ENCODE measurements at regions of chr22 and their contacts with region 1.

Region 1: DNA sequence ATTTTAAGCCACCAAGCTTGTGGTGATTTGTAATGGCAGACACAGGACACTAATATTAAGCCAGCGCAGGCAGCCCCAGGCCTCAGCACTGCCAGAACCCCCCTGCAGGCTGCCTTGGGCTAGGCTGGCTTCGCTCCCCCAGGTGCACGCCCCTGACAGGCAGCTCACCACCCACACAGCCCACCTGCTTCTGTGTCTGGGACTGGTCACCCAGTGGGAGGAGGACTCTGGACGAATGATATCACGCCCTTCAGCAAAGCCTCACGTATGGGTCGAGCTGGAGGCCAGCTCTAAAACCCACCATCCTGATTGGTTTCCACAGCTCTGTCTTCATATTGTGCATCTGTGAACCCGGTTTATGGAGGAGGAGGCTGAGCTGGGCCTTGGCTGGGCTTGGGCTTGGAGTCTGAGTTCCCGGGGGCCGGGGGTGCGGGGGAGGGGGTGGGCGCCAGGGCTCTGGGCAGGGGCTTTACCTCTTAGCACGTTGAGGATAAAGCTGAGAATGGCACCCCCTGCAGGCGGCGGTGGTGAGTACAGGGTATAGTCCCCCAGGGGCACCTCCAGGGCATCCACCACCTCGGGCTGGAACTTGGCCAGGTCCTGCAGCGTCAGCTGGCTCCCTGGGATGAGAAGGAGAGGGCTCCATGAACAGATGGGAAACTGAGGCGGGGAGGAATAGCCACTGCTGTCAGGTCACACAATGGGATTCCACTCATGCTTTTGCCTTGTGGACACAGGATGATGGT is 13.8 kb downstream of the GGT5 start:
- DNase-seq: no peak
- ATAC-seq: peak; percentile 88
- H3K4me3 ChIP-seq: no peak overlapping the region
- H3K27ac ChIP-seq: peak overlapping the region; percentile 29; the same call in 1 of the 2 replicates
- H3K4me1 ChIP-seq: peaks cover 8 to 10% of the 10 kb centered on the region in 2 experiments; a peak in 3 of 4 replicates
- H3K27me3 ChIP-seq: no peaks in the 10 kb centered on the region
- CTCF ChIP-seq: peak in 2 of 3 experiments; percentile 54 to 59; a peak in 4 of 6 replicates
- POLR2A ChIP-seq: no peak
- RAD21 ChIP-seq: 0 out of 2 replicates have a peak, but pooled peaks have one; percentile 24

Region 2: DNA sequence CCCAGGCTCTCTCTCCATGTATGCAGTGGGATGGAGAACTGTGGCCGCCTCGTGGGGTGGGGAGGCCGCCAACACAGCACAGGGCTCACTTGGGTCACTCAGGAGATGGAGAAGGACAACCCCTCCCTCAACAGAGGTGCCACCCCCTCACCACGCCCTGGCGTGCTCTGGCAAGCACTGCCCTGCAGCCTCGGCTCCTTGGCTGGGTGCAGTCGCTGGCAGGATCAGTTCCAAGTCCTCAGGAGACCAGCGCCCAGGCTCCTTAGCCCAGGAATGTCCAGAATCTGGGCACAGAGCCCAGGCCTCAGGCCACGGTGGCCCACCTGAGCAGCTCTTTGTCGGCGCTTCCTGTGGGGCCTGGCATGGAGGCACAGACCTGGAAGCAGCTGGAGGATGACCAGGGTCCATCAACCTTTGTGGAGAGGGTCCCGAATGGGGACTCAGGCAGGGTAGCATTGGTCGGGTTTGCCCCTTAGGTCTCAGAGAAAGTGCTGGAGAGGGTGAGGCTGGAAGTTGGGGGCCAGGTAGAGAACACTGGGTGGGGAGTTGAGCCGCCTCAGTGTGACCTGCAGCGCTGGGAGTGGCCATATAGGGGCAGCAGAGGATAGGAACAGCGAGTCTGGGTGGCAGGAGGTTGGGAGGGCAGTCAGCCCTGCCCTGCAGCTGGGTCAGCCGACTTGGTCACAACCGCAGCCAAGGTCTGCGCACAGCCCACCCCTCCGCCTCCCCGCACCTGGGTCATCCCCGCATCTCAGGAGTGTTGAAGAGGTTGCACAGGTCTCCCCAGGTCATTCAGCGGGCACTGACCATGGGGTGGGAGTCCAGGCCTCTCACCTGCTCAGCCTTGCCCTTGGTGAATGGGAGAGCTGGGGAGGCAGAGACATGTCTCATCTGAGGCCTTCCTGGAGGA is 41.6 kb before region 1 on chr22:
- CTCF ChIA-PET with region 1: interaction called, 40 read pairs
- POLR2A ChIA-PET with region 1: interaction called, 4 read pairs
- RAD21 ChIA-PET with region 1: interaction called, 7 to 13 read pairs
- intact Hi-C with region 1: no loop called
- DNase-seq: no peak
- ATAC-seq: peak; percentile 93
- H3K4me3 ChIP-seq: no peak overlapping the region
- H3K27ac ChIP-seq: peak overlapping the region; percentile 74
- H3K4me1 ChIP-seq: peaks cover 35 to 36% of the 10 kb centered on the region in 2 experiments
- H3K27me3 ChIP-seq: no peaks in the 10 kb centered on the region
- CTCF ChIP-seq: peak; percentile 90 to 96 (median 94)
- POLR2A ChIP-seq: no peak
- RAD21 ChIP-seq: peak; percentile 100

Region 3: DNA sequence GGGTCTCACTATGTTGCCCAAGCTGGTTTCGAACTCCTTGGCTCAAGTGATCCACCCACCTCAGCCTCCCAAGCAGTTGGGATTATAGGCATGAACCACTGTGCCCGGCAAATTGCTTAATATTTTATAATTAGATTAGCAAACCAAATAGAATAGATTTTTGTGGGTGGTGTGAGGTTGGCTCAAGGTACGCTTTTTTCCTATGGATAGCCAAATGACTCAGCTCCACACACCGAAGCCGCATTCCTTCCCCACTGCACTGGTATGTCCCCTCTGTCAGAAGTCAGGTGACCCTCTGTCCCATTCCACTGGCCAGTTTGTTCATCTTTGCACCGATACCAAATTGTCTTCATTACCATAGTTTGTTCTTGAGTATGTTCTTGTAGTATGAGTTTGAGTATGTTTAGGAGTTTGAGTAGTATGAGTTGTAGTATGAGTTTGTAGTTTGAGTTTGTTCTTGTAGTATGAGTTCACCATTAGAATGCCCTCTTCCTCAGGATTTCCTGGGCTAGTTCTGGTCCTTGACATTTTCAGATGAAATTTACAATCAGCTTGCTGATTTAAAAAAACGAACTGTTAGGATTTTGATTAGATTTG is 30.4 kb before region 1 on chr22:
- CTCF ChIA-PET with region 1: interaction called, 20 read pairs
- POLR2A ChIA-PET with region 1: interaction called, 8 read pairs
- RAD21 ChIA-PET with region 1: interaction called in 1 of 2 experiments, 4 read pairs
- intact Hi-C with region 1: no loop called
- DNase-seq: peak; percentile 67
- ATAC-seq: peak; percentile 64
- H3K4me3 ChIP-seq: peak overlapping the region in 1 of 2 experiments; percentile 29; a peak in 2 of 4 replicates
- H3K27ac ChIP-seq: peak overlapping the region; percentile 100
- H3K4me1 ChIP-seq: peaks cover 92 to 95% of the 10 kb centered on the region in 2 experiments
- H3K27me3 ChIP-seq: no peaks in the 10 kb centered on the region
- CTCF ChIP-seq: no peak
- POLR2A ChIP-seq: no peak
- RAD21 ChIP-seq: no peak

Region 4: DNA sequence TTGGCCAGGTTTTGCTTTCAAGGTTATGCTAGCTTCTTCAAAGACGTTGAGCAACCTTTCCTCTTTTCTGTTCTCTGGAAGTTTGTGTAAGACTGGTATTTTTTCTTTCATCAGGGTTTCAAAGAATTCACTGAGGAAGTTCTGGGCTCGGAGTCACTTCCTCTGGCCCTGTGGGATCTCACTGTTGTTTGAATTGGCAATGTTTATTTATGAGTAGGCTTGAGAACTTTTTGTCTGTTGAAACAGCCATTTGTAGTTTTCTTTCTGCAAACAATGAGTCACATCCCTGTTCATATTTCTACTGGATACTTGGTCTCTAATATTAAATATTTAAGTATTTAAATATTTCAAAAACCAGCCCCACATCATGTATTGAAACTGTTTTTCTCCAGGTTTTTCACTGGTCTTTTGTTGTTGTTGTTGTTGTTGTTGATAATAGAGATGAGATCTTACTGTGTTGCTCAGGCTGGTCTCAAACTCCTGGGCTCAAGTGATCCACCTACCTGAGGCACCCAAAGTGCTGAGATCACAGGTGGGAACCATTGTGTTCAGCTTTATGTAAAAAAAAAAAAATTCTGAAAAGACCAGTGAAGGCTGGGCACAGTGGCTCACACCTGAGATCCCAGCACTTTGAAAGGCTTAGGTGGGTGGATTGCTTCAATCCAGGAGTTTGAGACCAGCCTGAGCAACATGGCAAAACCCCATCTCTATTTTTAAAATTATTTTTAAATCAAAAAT is 22.9 kb before region 1 on chr22:
- CTCF ChIA-PET with region 1: interaction called, 16 read pairs
- POLR2A ChIA-PET with region 1: no interaction called
- RAD21 ChIA-PET with region 1: interaction called in 1 of 2 experiments, 4 read pairs
- intact Hi-C with region 1: no loop called
- DNase-seq: peak; percentile 95
- ATAC-seq: peak; percentile 71
- H3K4me3 ChIP-seq: peak overlapping the region in 1 of 2 experiments; percentile 26; a peak in 2 of 4 replicates
- H3K27ac ChIP-seq: peak overlapping the region; percentile 100
- H3K4me1 ChIP-seq: peaks cover 71 to 82% of the 10 kb centered on the region in 2 experiments
- H3K27me3 ChIP-seq: no peaks in the 10 kb centered on the region
- CTCF ChIP-seq: no peak
- POLR2A ChIP-seq: no peak
- RAD21 ChIP-seq: no peak

Region 5: GRCh38 chr22:24214467-24215285 is 16.4 kb before region 1 on chr22:
- CTCF ChIA-PET with region 1: interaction called, 16 read pairs
- POLR2A ChIA-PET with region 1: interaction called, 9 read pairs
- RAD21 ChIA-PET with region 1: no interaction called
- intact Hi-C with region 1: no loop called
- DNase-seq: no peak
- ATAC-seq: peak; percentile 81
- H3K4me3 ChIP-seq: no peak overlapping the region
- H3K27ac ChIP-seq: peak overlapping the region; percentile 51; the same call in 1 of the 2 replicates
- H3K4me1 ChIP-seq: peaks cover 23 to 32% of the 10 kb centered on the region in 2 experiments
- H3K27me3 ChIP-seq: no peaks in the 10 kb centered on the region
- CTCF ChIP-seq: peak in 1 of 3 experiments; percentile 11; a peak in 1 of 6 replicates
- POLR2A ChIP-seq: no peak
- RAD21 ChIP-seq: no peak